PC-3 (cell line): ENCODE measurements at regions of chr1 and their contacts with region 1.

Region 1: GRCh38 chr1:214927796-214928195 is 154.7 kb upstream of the KCNK2 start:
- DNase-seq: no peak
- ATAC-seq: no peak
- H3K4me3 ChIP-seq: no peak overlapping the region
- H3K27ac ChIP-seq: no peak overlapping the region
- H3K4me1 ChIP-seq: no peaks in the 10 kb centered on the region
- H3K27me3 ChIP-seq: no peaks in the 10 kb centered on the region
- CTCF ChIP-seq: no peak

Region 2: GRCh38 chr1:214678378-214678777 is 249.4 kb before region 1 on chr1:
- CTCF ChIA-PET with region 1: no interaction called
- POLR2A ChIA-PET with region 1: no interaction called
- intact Hi-C with region 1: no loop called
- DNase-seq: peak; percentile 88
- ATAC-seq: peak; percentile 97
- H3K4me3 ChIP-seq: no peak overlapping the region
- H3K27ac ChIP-seq: peak overlapping the region; percentile 48
- H3K4me1 ChIP-seq: peaks cover 21% of the 10 kb centered on the region
- H3K27me3 ChIP-seq: no peaks in the 10 kb centered on the region
- CTCF ChIP-seq: no peak

Region 3: GRCh38 chr1:214941061-214941460 is 13.3 kb after region 1 on chr1:
- CTCF ChIA-PET with region 1: no interaction called
- POLR2A ChIA-PET with region 1: no interaction called
- intact Hi-C with region 1: no loop called
- DNase-seq: no peak
- ATAC-seq: no peak
- H3K4me3 ChIP-seq: no peak overlapping the region
- H3K27ac ChIP-seq: no peak overlapping the region
- H3K4me1 ChIP-seq: no peaks in the 10 kb centered on the region
- H3K27me3 ChIP-seq: no peaks in the 10 kb centered on the region
- CTCF ChIP-seq: no peak

Region 4: DNA sequence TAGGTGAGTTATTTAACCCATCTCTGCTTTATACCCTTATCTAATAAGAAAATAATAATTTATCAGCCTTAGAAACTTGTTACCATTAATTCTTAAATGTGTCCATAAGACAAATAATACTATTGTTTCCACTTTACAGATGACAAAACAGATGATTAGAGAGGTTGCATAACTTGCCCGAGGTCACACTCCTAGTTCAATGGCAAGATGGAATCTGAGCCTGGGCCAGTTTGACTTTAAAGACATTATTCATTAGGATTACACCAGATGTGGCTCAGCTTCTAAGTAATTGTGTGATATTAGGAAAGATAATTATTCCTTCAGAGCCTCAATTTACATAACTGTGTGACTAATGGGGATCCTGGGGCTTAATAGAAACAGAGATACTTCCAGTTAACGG is 112.4 kb after region 1 on chr1:
- CTCF ChIA-PET with region 1: interaction called, 25 read pairs
- POLR2A ChIA-PET with region 1: no interaction called
- intact Hi-C with region 1: no loop called
- DNase-seq: no peak
- ATAC-seq: no peak
- H3K4me3 ChIP-seq: no peak overlapping the region
- H3K27ac ChIP-seq: no peak overlapping the region
- H3K4me1 ChIP-seq: no peaks in the 10 kb centered on the region
- H3K27me3 ChIP-seq: peaks cover 11% of the 10 kb centered on the region; the same call in 1 of the 2 replicates
- CTCF ChIP-seq: no peak